A673 (cell line): ENCODE measurements at regions of chr4 and their contacts with region 1.

Region 1: DNA sequence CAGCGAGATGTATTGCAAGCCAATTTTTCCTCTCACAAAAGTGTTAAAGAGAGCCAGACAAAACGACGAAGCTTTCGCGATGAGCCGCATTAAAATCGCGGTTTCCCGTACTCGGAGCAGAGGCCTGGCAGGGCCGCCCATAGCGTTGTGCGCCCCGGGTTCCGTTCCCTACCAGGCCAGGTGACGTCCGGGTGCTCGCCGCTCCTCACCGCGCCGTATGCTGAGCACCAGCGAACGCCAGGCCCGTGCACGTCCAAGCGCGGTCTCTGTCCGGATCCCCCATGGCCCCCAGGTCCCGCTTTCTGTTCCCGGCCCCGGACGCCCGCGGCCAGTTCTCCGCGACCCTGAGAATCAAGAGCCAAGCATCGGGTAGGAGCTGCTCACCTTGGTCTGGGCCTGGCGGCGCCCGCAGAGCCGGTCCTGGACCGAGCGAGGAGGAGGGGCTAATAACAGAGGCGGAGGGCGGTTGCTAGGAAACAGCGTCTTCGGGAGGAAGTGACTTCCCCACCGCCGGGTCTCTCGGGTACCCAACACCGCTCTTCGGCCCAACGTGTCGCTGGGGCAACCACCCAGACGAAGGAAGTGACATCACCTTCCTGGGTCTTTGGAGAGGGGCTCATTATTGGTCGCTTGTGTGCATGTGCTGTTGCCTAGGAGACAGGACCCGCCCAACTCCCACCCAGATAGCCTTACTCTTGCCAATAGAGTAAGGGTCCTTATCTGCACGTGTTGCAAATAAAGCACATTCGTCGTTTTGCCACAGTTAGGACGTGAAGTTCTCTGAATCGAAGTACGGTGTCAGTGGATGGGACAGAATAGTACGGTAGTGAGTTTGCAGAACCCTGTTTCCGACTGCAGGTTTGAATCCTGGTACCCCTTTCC is at the start of gene MAP9:
- DNase-seq: peak; percentile 97
- H3K4me3 ChIP-seq: peak within 1 kb of the TSS; percentile 76
- H3K27ac ChIP-seq: no peak within 1 kb of the TSS
- H3K4me1 ChIP-seq: no peaks in the 10 kb centered on the region
- H3K27me3 ChIP-seq: no peaks in the 10 kb centered on the region
- CTCF ChIP-seq: no peak
- total RNA-seq, gene MAP9: 11.3 and 13.7 TPM in 2 replicates

Region 2: GRCh38 chr4:154399259-154399974 is 977.2 kb before region 1 on chr4:
- CTCF ChIA-PET with region 1: no interaction called
- POLR2A ChIA-PET with region 1: no interaction called
- intact Hi-C with region 1: no loop called
- DNase-seq: peak; percentile 49
- H3K4me3 ChIP-seq: peak overlapping the region; percentile 10
- H3K27ac ChIP-seq: no peak overlapping the region
- H3K4me1 ChIP-seq: no peaks in the 10 kb centered on the region
- H3K27me3 ChIP-seq: no peaks in the 10 kb centered on the region
- CTCF ChIP-seq: peak; percentile 55

Region 3: DNA sequence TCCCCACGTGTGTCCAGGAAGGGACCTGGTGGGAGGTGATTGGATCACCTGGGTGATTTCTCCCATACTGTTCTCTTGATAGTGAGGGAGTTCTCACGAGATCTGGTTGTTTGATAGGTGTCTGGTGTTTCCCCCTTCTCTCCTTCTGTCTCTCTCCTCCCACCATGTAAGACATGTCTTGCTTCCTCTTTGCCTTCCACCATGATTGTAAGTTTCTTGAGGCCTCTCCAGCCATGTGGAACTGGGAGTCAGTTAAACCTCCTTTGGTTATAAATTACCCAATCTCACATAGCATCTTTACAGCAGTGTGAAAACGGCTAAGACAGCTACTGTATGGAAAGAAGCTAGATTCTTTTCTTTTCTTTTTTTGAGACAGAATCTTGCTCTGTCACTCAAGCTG is 742.6 kb before region 1 on chr4:
- CTCF ChIA-PET with region 1: no interaction called
- POLR2A ChIA-PET with region 1: no interaction called
- intact Hi-C with region 1: loop called (anchors 10 kb)
- DNase-seq: no peak
- H3K4me3 ChIP-seq: no peak overlapping the region
- H3K27ac ChIP-seq: no peak overlapping the region
- H3K4me1 ChIP-seq: no peaks in the 10 kb centered on the region
- H3K27me3 ChIP-seq: no peaks in the 10 kb centered on the region
- CTCF ChIP-seq: no peak

Region 4: GRCh38 chr4:155411546-155411945 is 34.9 kb after region 1 on chr4:
- CTCF ChIA-PET with region 1: no interaction called
- POLR2A ChIA-PET with region 1: no interaction called
- intact Hi-C with region 1: no loop called
- DNase-seq: no peak
- H3K4me3 ChIP-seq: no peak overlapping the region
- H3K27ac ChIP-seq: no peak overlapping the region
- H3K4me1 ChIP-seq: no peaks in the 10 kb centered on the region
- H3K27me3 ChIP-seq: no peaks in the 10 kb centered on the region
- CTCF ChIP-seq: no peak

Region 5: GRCh38 chr4:155473420-155474095 is 96.9 kb after region 1 on chr4:
- CTCF ChIA-PET with region 1: no interaction called
- POLR2A ChIA-PET with region 1: no interaction called
- intact Hi-C with region 1: no loop called
- DNase-seq: no peak
- H3K4me3 ChIP-seq: no peak overlapping the region
- H3K27ac ChIP-seq: no peak overlapping the region
- H3K4me1 ChIP-seq: no peaks in the 10 kb centered on the region
- H3K27me3 ChIP-seq: no peaks in the 10 kb centered on the region
- CTCF ChIP-seq: no peak

Region 6: GRCh38 chr4:155766622-155767021 is 390.0 kb after region 1 on chr4:
- CTCF ChIA-PET with region 1: no interaction called
- POLR2A ChIA-PET with region 1: interaction called, 12 read pairs
- intact Hi-C with region 1: no loop called
- DNase-seq: no peak
- H3K4me3 ChIP-seq: no peak overlapping the region
- H3K27ac ChIP-seq: no peak overlapping the region
- H3K4me1 ChIP-seq: no peaks in the 10 kb centered on the region
- H3K27me3 ChIP-seq: peaks cover 4% of the 10 kb centered on the region
- CTCF ChIP-seq: no peak

Region 7: DNA sequence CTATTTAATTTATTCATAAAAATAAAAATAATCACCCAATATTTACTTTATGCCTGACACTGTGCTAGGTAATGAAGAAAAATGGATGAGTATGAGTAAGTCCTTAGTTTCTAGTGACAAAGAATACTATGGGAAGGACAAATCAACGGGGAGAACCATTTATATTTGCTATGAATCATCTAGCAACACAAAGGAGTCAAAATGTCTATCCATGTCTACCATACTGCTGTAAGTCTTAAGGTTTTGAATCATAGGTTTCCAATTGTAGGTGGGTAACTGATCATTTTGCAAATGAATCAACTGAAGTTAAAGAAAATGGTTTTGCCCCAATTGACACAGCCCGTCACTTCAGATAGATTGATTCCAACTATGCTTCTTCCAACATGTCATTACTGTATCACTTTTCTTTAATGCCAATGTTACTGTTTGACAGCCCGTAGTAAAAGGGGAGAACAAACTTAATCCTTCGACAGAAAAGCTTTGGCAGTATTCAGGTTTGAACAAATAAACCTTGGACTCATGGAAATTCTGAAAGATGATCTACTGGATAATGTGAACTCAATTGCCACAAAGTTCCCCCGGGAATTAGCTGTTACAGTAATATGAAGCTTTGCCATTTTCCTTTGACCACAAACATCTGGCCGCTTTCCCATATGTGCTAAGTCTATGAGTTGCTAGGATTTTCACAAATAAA is 530.1 kb after region 1 on chr4:
- CTCF ChIA-PET with region 1: no interaction called
- POLR2A ChIA-PET with region 1: no interaction called
- intact Hi-C with region 1: no loop called
- DNase-seq: peak; percentile 77
- H3K4me3 ChIP-seq: no peak overlapping the region
- H3K27ac ChIP-seq: no peak overlapping the region
- H3K4me1 ChIP-seq: peaks cover 10% of the 10 kb centered on the region
- H3K27me3 ChIP-seq: no peaks in the 10 kb centered on the region
- CTCF ChIP-seq: no peak